WTC11 (cell line): ENCODE measurements at regions of chr9 and their contacts with region 1.

Region 1: DNA sequence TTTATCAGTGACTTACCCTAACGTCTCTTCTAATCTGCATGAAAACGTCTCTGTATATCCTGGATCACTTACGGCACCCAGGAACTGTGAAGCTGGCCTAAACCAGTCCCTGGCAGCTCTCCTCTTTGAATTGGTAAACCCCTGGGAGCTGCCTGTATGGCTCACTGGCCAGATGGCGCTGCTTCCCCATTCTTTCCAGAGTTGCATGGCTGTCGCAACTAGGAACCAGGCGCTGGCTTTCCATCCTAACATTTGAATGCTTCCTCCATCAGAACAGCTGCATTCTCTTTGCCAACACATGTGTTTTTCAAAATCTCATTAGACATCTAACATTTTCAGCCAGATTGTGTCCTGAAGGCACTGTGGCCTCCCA is 8.0 kb upstream of the PCA3 start:
- DNase-seq: peak; percentile 69
- ATAC-seq: peak; percentile 95
- H3K4me3 Mint-ChIP-seq: no peak overlapping the region
- H3K27ac Mint-ChIP-seq: peak overlapping the region; percentile 9; the same call in 1 of the 2 replicates
- H3K4me1 Mint-ChIP-seq: peaks cover 13% of the 10 kb centered on the region
- H3K27me3 Mint-ChIP-seq: no peaks in the 10 kb centered on the region
- CTCF ChIP-seq: no peak

Region 2: GRCh38 chr9:76803083-76803482 is 46.8 kb after region 1 on chr9:
- CTCF ChIA-PET with region 1: interaction called, 10 read pairs
- POLR2A ChIA-PET with region 1: no interaction called
- DNase-seq: no peak
- ATAC-seq: peak; percentile 79
- H3K4me3 Mint-ChIP-seq: no peak overlapping the region
- H3K27ac Mint-ChIP-seq: no peak overlapping the region
- H3K4me1 Mint-ChIP-seq: peaks cover 29% of the 10 kb centered on the region
- H3K27me3 Mint-ChIP-seq: no peaks in the 10 kb centered on the region
- CTCF ChIP-seq: no peak

Region 3: DNA sequence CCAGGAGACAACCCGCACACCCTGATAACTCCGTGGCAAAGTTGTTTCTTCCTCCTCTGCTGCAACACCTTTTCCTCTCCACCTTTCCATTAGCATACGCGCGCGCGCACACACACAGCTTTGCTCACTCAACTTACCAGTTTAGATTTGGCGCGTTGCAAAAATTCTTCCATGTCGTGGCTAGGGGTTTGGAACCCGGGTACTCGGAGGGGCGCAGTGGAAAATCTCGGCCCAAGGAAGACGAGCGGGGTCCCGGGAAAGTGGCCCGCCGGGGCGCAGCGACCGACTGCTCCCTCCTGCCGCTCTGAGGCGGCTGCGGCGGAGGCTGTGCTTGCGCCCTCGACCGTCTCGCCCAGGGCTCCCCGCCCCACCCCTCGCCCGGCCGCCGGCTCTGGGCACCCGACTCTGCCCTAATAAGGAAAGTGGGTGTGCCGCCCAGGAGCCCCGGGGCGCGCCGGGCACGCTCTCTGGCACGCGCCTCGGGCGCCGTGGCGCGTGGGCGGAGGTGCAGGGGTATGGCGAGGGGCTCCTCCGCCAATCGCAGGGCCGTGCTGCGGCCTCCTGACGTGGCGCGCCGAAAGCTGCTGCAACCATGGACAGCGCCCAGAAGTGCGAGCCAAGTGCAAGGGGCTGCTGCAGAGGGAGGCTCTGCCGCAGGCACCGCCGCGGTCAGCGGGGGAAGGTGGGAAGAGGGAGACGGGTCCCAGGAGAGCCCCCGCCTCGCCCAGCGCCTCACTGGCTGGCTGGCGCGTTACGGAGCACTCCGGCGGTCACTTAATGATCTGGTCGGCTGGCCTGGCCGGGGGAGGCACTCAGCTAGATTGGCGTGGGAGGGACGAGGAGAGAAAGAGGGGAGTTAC is 149.8 kb after region 1 on chr9 and contains the start of gene PRUNE2:
- CTCF ChIA-PET with region 1: no interaction called
- POLR2A ChIA-PET with region 1: no interaction called
- DNase-seq: peak; percentile 93
- ATAC-seq: peak; percentile 96
- H3K4me3 Mint-ChIP-seq: peak within 1 kb of the TSS; percentile 83
- H3K27ac Mint-ChIP-seq: no peak within 1 kb of the TSS; the same call in 1 of the 2 replicates
- H3K4me1 Mint-ChIP-seq: peaks cover 35% of the 10 kb centered on the region
- H3K27me3 Mint-ChIP-seq: peaks cover 48% of the 10 kb centered on the region
- CTCF ChIP-seq: no peak
- total RNA-seq, gene PRUNE2: 9.3 to 13.1 TPM (median 9.6 TPM) in 3 replicates